ENCODE measurements at regions of chrX and their contacts with region 1.

Region 1: DNA sequence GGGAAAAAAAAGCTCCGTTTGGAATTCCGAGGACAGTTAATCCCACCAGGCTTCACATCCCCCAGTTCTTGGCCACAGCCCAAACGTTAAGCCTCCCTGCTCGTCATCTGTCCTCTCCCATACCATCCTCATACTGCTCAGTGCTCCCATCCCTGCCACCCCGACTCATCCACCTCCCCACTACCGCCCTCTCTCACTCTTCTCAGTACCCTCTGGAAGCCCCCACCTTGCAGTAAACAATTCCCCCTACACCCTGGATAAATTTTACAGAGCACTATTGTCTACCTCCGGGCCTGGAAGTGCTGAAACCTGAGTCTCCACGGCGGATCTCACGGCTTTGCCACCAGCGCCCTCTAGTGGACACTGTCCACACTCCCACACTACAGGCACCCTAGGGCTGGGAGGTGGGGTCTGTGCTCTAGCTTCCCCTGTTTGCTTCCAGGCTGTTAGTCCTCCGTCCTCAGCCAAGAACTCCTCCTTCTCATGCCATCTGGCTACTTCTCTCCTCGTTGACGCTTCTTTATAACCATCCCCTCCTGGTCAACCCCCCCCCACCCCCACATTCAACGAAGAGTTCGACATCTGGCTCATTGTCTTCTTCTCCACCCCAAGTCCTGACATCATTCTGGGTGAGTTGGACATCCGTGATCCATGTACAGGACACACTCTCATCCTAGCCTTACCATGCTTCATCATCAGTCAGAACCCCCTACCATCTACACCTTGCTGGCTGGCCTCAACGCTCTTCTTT is 54.5 kb downstream of the RTL9 start:
- DNase-seq: no peak
- H3K4me3 ChIP-seq: no peak overlapping the region
- H3K27ac ChIP-seq: no peak overlapping the region
- H3K27me3 ChIP-seq: no peaks in the 10 kb centered on the region
- CTCF ChIP-seq: peak; percentile 80

Region 2: DNA sequence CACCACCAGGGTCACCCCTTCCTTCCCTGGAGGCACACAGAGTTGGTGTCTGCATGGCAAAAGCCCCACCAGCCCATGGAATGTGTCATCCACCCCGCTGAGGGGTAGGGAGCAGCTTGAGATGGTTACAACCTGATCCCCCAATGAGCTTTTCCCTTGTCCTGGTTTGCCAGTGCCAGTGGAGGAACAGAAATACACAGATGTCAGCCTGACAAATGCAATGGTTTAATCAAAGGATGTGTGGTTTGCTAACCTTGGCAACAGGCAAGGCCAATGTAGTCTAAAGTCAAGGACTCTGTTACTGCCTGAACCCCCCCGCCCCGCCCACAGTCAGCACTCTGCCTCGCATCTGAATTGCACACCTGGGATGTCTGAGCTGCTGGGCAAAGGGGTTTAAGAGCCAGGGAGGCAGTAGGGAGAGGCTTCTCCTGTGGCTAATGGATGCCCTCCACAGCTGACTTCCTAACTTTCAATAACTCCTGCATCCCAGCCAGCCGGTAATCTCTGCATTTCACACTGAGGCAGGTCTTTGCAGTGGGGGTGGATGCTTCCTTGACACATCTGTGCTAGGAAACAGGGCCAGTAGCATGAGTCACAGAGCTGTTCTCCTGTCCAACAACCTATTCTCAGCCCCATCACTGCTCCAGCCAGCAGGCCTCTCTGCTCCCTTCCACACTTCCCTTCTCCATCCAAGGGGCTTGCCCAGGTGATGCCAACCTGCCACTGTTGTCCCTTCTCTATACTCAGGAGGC is 232.8 kb before region 1 on chrX:
- CTCF ChIA-PET with region 1: interaction called, 10 read pairs
- POLR2A ChIA-PET with region 1: interaction called, 3 read pairs
- DNase-seq: peak; percentile 38
- H3K4me3 ChIP-seq: no peak overlapping the region
- H3K27ac ChIP-seq: peak overlapping the region; percentile 65
- H3K27me3 ChIP-seq: no peaks in the 10 kb centered on the region
- CTCF ChIP-seq: no peak

Region 3: GRCh38 chrX:110402479-110403230 is 10.5 kb before region 1 on chrX:
- CTCF ChIA-PET with region 1: interaction called, 32 read pairs
- POLR2A ChIA-PET with region 1: no interaction called
- DNase-seq: no peak
- H3K4me3 ChIP-seq: no peak overlapping the region
- H3K27ac ChIP-seq: peak overlapping the region; percentile 52
- H3K27me3 ChIP-seq: no peaks in the 10 kb centered on the region
- CTCF ChIP-seq: no peak